Naive thymus-derived CD4-positive, alpha-beta T cell (primary cell): ENCODE measurements at regions of chr15 and their contacts with region 1.

Region 1: GRCh38 chr15:77419836-77420609 is at the start of gene PEAK1:
- DNase-seq: peak; percentile 94 to 100 (median 99)
- ATAC-seq: peak; percentile 99
- H3K4me3 ChIP-seq: peak within 1 kb of the TSS; percentile 74
- H3K4me3 Mint-ChIP-seq: peak within 1 kb of the TSS; percentile 93 to 99 (median 98)
- H3K27ac ChIP-seq: peak within 1 kb of the TSS; percentile 86
- H3K27ac Mint-ChIP-seq: peak within 1 kb of the TSS; percentile 91 to 98 (median 97)
- H3K4me1 ChIP-seq: peaks cover 5 to 12% of the 10 kb centered on the region in 2 donors
- H3K4me1 Mint-ChIP-seq: peaks cover 21 to 50% (median 47%) of the 10 kb centered on the region in 7 donors
- H3K27me3 ChIP-seq: no peaks in the 10 kb centered on the region
- H3K27me3 Mint-ChIP-seq: peaks cover 0 to 4% (median 0%) of the 10 kb centered on the region in 5 donors
- total RNA-seq, gene PEAK1: 11.1 to 31.0 (median 15.0) TPM

Region 2: DNA sequence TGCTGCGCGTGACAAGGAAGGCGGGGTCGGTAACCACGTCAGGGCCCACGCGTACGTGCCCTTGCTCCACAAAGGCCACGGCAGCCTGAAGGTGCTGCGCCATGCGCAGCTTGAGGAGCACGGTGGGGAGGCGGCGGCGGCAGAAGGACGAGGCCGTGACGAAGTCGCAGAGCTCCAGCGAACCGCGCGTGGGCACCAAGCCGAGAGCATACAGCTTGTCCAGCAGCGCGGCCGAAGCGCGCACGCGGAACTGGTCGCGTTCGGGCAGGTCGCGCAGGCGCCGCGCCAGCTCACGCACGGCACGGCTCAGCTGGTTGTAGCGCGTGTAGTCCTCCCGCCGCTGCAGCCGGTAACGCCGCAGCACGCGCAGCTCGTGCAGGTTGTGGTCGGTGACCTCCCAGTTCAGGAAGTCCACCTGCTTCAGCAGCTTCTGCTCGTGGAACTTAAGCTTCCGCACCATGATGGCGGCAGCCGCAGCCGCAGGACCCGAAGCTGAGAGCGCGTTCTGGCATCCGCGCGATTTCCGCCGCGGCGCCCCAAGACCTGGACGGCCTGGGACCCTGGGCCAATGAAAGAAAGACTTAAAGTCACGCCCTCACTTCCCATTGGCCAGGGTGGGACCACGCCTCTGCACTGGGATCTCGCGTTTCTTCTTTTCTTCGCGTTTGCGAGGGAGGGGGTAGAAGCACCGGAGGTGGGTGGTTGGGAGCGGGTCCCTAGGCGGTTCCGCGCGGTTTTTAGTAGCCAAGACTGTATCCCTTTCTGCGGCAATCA is 1780.1 kb before region 1 on chr15 and contains the start of gene IMP3:
- CTCF ChIA-PET with region 1: no interaction called
- POLR2A ChIA-PET with region 1: no interaction called
- intact Hi-C with region 1: loop called in 1 of 2 experiments (anchors 5 kb)
- DNase-seq: peak; percentile 75 to 96 (median 93)
- ATAC-seq: peak; percentile 95
- H3K4me3 ChIP-seq: peak within 1 kb of the TSS; percentile 97
- H3K4me3 Mint-ChIP-seq: peak within 1 kb of the TSS; percentile 84 to 98 (median 95)
- H3K27ac ChIP-seq: peak within 1 kb of the TSS; percentile 85
- H3K27ac Mint-ChIP-seq: peak within 1 kb of the TSS; percentile 39 to 98 (median 96)
- H3K4me1 ChIP-seq: peaks cover 23 to 24% of the 10 kb centered on the region in 2 donors
- H3K4me1 Mint-ChIP-seq: peaks cover 33 to 49% (median 39%) of the 10 kb centered on the region in 7 donors
- H3K27me3 ChIP-seq: no peaks in the 10 kb centered on the region
- H3K27me3 Mint-ChIP-seq: no peaks in the 10 kb centered on the region
- total RNA-seq, gene IMP3: 32.3 to 100 (median 89.5) TPM

Region 3: GRCh38 chr15:76931397-76932007 is 488.5 kb before region 1 on chr15 and contains the start of gene RCN2:
- CTCF ChIA-PET with region 1: no interaction called
- POLR2A ChIA-PET with region 1: interaction called, 4 read pairs
- intact Hi-C with region 1: loop called (anchors 1 kb)
- DNase-seq: peak; percentile 81 to 95 (median 88)
- ATAC-seq: peak; percentile 99
- H3K4me3 ChIP-seq: peak within 1 kb of the TSS; percentile 70
- H3K4me3 Mint-ChIP-seq: peak within 1 kb of the TSS; percentile 89 to 95 (median 92)
- H3K27ac ChIP-seq: peak within 1 kb of the TSS; percentile 73
- H3K27ac Mint-ChIP-seq: peak within 1 kb of the TSS; percentile 76 to 96 (median 91)
- H3K4me1 ChIP-seq: peaks cover 4 to 14% of the 10 kb centered on the region in 2 donors
- H3K4me1 Mint-ChIP-seq: peaks cover 19 to 42% (median 33%) of the 10 kb centered on the region in 7 donors
- H3K27me3 ChIP-seq: no peaks in the 10 kb centered on the region
- H3K27me3 Mint-ChIP-seq: peaks cover 0 to 20% (median 0%) of the 10 kb centered on the region in 5 donors
- total RNA-seq, gene RCN2: 16.7 to 30.5 (median 28.1) TPM

Region 4: GRCh38 chr15:77070495-77071304 is 349.3 kb before region 1 on chr15 and contains the start of gene TSPAN3:
- CTCF ChIA-PET with region 1: no interaction called
- POLR2A ChIA-PET with region 1: no interaction called
- intact Hi-C with region 1: loop called in 1 of 2 experiments (anchors 1 kb)
- DNase-seq: peak; percentile 88 to 93 (median 92)
- ATAC-seq: peak; percentile 99
- H3K4me3 ChIP-seq: peak within 1 kb of the TSS; percentile 50
- H3K4me3 Mint-ChIP-seq: peak within 1 kb of the TSS; percentile 81 to 90 (median 86)
- H3K27ac ChIP-seq: peak within 1 kb of the TSS; percentile 62
- H3K27ac Mint-ChIP-seq: peak within 1 kb of the TSS; percentile 54 to 93 (median 80)
- H3K4me1 ChIP-seq: peaks cover 5 to 14% of the 10 kb centered on the region in 2 donors
- H3K4me1 Mint-ChIP-seq: peaks cover 7 to 48% (median 29%) of the 10 kb centered on the region in 7 donors
- H3K27me3 ChIP-seq: peaks cover 0 to 2% of the 10 kb centered on the region in 2 donors
- H3K27me3 Mint-ChIP-seq: peaks cover 0 to 22% (median 0%) of the 10 kb centered on the region in 5 donors
- total RNA-seq, gene TSPAN3: 17.5 to 24.4 (median 21.7) TPM

Region 5: GRCh38 chr15:77455696-77456321 is 35.8 kb after region 1 on chr15:
- CTCF ChIA-PET with region 1: no interaction called
- POLR2A ChIA-PET with region 1: no interaction called
- intact Hi-C with region 1: loop called (anchors 2 to 5 kb)
- DNase-seq: no peak
- ATAC-seq: no peak
- H3K4me3 ChIP-seq: no peak overlapping the region
- H3K4me3 Mint-ChIP-seq: peak overlapping the region in 1 of 10 donors; percentile 24
- H3K27ac ChIP-seq: no peak overlapping the region
- H3K27ac Mint-ChIP-seq: peak overlapping the region in 2 of 9 donors; percentile 4 to 28
- H3K4me1 ChIP-seq: peaks cover 11 to 25% of the 10 kb centered on the region in 2 donors
- H3K4me1 Mint-ChIP-seq: peaks cover 22 to 65% (median 54%) of the 10 kb centered on the region in 7 donors
- H3K27me3 ChIP-seq: no peaks in the 10 kb centered on the region
- H3K27me3 Mint-ChIP-seq: no peaks in the 10 kb centered on the region

Region 6: DNA sequence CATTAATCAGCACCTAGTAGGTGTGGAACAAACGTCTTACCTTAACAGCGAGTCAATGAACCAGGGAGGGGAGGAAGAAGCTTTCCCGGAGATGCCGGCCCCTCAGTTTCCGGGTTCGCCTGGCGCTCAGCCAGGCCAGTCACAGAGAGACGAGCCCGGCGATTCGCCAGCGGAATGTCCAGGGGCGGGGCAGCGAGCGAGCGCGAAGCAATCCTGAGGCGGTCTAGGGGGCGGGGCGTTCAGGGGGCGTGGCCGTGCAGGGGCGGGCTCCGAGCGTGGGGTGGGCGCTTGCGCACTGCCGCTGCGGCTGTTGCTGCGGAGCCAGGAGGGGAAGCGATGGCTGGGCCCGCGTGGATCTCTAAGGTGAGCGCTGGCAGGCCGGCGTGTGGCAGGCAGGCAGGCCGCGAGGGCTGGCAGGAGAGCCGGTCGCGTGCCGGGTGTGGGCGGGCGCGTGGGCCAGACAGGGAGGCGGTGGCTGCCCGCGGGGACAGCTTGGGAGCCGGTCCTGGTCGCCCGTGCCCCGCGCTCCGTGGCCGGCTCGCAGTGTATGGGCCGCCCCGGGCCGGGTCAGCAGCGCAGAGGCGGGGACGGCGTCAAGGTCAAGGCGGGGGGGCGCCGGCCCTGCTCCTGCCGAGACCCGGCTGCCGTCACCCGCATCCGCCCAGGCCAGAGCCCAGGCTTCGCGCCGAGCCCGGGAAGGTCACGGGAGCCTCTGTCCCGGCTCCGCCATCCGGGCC is 729.2 kb after region 1 on chr15 and contains the start of gene IDH3A:
- CTCF ChIA-PET with region 1: no interaction called
- POLR2A ChIA-PET with region 1: no interaction called
- intact Hi-C with region 1: loop called in 1 of 2 experiments (anchors 5 kb)
- DNase-seq: peak; percentile 97 to 100 (median 99)
- ATAC-seq: peak; percentile 99
- H3K4me3 ChIP-seq: peak within 1 kb of the TSS; percentile 76
- H3K4me3 Mint-ChIP-seq: peak within 1 kb of the TSS; percentile 93 to 98 (median 96)
- H3K27ac ChIP-seq: peak within 1 kb of the TSS; percentile 77
- H3K27ac Mint-ChIP-seq: peak within 1 kb of the TSS; percentile 91 to 97 (median 95)
- H3K4me1 ChIP-seq: peaks cover 17 to 24% of the 10 kb centered on the region in 2 donors
- H3K4me1 Mint-ChIP-seq: peaks cover 25 to 51% (median 43%) of the 10 kb centered on the region in 7 donors
- H3K27me3 ChIP-seq: no peaks in the 10 kb centered on the region
- H3K27me3 Mint-ChIP-seq: no peaks in the 10 kb centered on the region
- total RNA-seq, gene IDH3A: 44.4 to 105 (median 61.1) TPM